ENCODE measurements at regions of chr7 and their contacts with region 1.

Region 1: DNA sequence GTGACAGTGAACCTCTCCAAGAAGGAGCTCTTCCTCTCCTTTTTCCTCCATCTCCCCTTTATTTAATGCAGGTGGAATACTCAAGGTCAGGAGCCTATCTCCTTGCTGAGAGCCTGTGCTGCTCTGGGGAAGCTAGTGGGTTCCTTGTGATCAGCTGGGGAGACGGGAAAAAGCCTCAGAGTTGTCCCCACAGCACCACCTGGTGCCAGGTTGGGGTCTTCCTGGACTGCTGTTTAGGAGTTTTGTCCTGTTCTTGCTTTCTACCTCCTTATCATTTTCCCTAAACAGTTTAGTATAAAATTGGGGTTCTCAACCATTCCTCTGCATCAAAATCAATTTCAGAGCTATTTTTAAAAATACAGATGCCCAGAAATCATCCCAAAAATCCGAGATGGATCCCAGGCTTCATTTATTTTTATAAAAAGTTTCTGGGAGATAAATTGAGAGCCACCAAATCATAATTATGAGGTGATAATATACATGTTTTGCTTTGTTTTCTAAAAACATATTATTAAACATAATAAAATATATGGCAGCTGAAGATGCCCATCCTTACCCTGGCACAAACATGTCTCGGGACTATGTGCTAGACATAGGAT is 44.3 kb downstream of the MACC1 start:
- DNase-seq: peak; percentile 50 to 58
- ATAC-seq: peak; percentile 47

Region 2: DNA sequence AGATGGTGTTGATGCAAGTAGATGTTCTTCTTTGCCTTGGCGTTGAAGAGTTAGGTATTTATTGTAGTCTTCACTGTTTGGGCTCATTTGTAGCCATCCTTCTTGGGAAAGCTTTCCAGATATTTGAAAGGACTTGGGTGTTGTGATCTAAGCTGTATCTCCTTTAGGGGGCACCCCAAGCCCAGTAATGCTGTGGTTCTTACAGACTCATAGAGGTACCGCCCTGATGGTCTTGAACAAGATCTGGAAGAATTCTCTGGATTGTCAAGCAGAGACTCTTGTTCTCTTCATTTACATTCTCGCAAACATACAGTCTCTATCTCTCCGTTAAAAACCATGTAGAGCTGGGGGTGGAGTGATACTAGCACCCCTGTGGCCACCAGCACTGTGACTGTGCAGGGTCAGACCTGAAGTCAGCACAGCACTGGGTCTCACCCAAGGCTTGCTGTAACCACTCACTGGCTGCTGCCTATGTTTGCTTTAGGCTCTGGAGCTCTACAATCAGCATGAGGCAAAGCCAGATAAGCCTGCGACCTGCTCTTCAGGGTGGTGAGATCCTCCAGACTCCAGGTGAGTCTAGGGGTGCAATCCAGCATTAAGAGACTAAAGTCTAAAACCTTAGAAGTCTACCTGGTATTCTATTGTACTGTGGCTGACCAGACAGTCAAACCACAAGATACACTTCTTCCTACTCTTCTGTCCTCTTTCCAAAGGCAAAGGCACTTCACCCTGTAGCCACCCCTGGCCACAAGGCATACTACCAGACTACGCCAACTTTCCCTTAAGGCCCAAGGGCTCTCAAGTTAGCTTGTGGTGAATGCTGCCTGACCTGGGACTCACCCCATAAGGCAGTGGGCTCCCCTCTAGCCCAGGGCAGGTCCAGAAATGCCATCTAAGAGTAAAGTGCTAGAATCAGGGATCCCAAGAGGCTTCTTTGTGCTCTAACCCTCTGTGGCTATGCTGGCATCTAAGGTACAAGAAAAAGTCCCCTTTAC is 189.7 kb before region 1 on chr7:
- intact Hi-C with region 1: loop called in 1 of 2 experiments (anchors 5 kb)
- DNase-seq: peak; percentile 26 to 38
- ATAC-seq: no peak

Region 3: DNA sequence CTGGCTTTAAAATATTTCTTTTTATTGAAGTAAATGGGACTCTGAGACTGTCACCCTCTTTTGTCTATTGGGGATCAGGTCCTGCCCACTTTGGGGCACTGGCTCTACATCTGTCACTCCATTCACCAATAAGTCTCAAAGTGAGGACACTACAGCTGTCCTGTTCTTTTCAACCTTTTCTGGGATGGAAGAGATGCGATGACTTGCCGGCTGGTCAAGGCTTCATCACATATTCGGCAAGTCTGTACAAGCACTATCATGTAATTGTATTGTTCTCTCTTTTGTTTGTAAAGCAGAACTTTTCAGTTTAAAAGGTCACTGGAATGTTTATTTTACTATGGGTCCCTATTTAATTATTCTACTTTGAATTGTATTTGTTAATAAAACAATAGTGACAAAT is 631.5 kb after region 1 on chr7:
- intact Hi-C with region 1: no loop called
- DNase-seq: no peak
- ATAC-seq: no peak